Caco-2 (cell line): ENCODE measurements at regions of chr21 and their contacts with region 1.

Region 1: DNA sequence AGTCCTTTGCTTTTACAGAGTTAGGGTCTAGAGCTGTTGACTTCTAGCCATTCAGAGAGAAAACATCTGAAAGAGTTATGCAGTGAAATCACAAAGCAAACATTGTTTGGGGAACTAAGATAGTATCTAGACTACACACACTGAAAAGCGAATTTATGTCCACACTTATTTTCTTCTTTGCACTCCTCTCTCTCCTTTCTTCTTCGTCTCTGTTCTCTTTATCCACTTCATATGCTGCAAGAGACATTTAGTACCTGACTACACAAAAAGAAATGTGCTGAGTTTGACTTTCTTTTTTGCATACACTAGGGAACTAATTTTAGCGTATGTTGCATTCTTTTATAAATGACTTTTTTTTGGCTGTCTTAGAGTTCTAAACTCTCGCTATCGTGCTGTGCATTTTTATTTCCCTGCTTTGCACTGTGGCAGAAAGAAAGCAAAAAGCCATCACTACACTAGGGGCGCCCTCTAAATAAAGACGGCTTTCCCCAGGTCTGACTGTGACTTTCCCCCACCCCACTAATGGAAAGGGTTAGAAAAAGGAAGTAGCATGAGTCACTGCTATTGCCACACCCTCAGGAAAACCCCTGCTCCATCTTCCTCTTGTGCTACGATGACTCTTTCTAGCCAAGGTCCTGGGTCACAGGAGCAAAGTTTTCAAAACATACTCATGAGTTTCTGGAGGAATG is 65.7 kb downstream of the MAP3K7CL start:
- DNase-seq: peak; percentile 71 to 74
- H3K4me3 ChIP-seq: no peak overlapping the region
- H3K4me3 Mint-ChIP-seq: peak overlapping the region; percentile 76
- H3K27ac Mint-ChIP-seq: peak overlapping the region; percentile 92
- H3K4me1 ChIP-seq: peaks cover 49% of the 10 kb centered on the region
- H3K4me1 Mint-ChIP-seq: peaks cover 36% of the 10 kb centered on the region
- H3K27me3 ChIP-seq: no peaks in the 10 kb centered on the region
- H3K27me3 Mint-ChIP-seq: no peaks in the 10 kb centered on the region
- CTCF ChIP-seq: peak; percentile 23 to 31

Region 2: DNA sequence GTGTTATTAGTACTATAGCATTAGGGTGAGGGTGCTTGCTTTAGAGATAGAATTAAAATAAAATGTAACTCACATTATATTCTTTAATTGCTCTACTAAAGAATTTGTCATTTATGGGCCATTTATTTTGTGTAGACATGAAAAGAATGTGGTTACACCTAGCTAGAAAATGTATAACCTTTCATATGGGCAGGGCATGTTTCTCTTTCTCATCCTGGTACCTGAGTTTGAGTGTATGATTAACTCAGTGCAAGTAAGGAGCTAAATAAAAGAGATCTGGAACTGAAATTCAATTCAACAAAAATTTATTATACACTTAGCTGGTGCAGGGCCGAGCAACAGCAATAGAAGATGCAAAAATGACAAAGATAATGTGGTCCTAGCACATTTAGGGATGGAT is 18.3 kb before region 1 on chr21:
- CTCF ChIA-PET with region 1: no interaction called
- POLR2A ChIA-PET with region 1: no interaction called
- intact Hi-C with region 1: loop called (anchors 1 kb)
- DNase-seq: no peak
- H3K4me3 ChIP-seq: no peak overlapping the region
- H3K4me3 Mint-ChIP-seq: peak overlapping the region; percentile 6
- H3K27ac Mint-ChIP-seq: peak overlapping the region; percentile 37
- H3K4me1 ChIP-seq: peaks cover 45% of the 10 kb centered on the region
- H3K4me1 Mint-ChIP-seq: peaks cover 29% of the 10 kb centered on the region
- H3K27me3 ChIP-seq: no peaks in the 10 kb centered on the region
- H3K27me3 Mint-ChIP-seq: no peaks in the 10 kb centered on the region
- CTCF ChIP-seq: no peak

Region 3: GRCh38 chr21:29271927-29272333 is 75.8 kb after region 1 on chr21:
- CTCF ChIA-PET with region 1: no interaction called
- POLR2A ChIA-PET with region 1: interaction called, 3 read pairs
- intact Hi-C with region 1: loop called (anchors 2 kb)
- DNase-seq: peak; percentile 82 to 90
- H3K4me3 ChIP-seq: no peak overlapping the region
- H3K4me3 Mint-ChIP-seq: no peak overlapping the region
- H3K27ac Mint-ChIP-seq: peak overlapping the region; percentile 69
- H3K4me1 ChIP-seq: peaks cover 11% of the 10 kb centered on the region; the same call in 1 of the 2 replicates
- H3K4me1 Mint-ChIP-seq: peaks cover 22% of the 10 kb centered on the region
- H3K27me3 ChIP-seq: no peaks in the 10 kb centered on the region
- H3K27me3 Mint-ChIP-seq: no peaks in the 10 kb centered on the region
- CTCF ChIP-seq: no peak

Region 4: DNA sequence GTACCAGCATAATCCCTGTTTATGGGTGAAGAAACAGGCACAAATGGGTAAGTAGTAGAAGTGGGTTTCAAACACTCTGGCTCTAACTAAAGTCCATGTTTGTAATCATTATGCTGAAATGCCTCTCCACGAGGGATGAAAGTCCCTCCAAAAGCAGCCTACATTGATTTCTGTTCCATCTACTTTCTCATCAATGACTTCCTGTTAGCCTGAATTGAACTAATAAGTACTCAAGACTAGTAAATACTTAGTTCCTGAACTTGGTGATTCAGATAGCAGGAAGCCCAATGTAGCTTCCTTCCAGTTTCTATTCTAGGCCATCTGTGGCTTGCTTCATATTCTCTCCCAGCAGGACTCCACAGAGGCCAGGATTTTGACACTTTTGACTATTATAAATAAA is 91.3 kb after region 1 on chr21:
- CTCF ChIA-PET with region 1: no interaction called
- POLR2A ChIA-PET with region 1: no interaction called
- intact Hi-C with region 1: no loop called
- DNase-seq: no peak
- H3K4me3 ChIP-seq: no peak overlapping the region
- H3K4me3 Mint-ChIP-seq: no peak overlapping the region
- H3K27ac Mint-ChIP-seq: no peak overlapping the region
- H3K4me1 ChIP-seq: peaks cover 10% of the 10 kb centered on the region; the same call in 1 of the 2 replicates
- H3K4me1 Mint-ChIP-seq: peaks cover 6% of the 10 kb centered on the region
- H3K27me3 ChIP-seq: no peaks in the 10 kb centered on the region
- H3K27me3 Mint-ChIP-seq: no peaks in the 10 kb centered on the region
- CTCF ChIP-seq: no peak